MCF 10A (cell line): ENCODE measurements at regions of chr2 and their contacts with region 1.

Region 1: DNA sequence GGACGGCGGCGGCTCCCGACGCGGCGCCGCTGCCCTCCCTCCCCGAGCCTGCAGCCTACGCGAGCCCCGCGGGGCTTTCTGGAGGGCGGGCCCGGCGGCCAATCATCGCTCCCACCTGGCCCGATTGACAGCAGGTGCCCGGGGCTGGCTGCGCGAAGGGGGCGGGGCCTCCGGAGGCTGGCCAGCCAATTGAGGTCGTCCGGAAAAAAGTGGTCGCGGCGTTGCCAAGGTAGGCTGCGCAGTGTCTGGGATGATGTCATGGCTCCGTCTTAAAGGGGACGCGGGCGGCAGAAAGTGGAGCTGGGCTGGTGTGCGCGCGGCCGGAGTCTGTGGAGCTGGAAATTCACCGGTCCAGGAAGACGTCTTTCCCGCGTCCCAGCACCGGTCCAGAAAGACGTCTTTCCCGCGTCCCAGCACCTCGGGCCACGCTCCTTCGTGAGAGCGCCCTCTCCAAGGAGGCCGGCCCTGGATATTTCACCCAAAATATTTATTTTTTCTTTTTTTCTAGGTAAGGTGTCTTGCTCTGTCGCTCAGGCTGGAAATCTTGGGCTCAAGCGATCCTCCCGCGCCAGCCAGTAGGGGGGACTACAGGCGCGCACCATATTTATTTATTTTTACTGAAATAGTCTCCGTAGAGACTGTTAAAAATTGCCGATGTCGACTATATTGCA is at the start of gene ACTR1B:
- DNase-seq: peak; percentile 98
- H3K4me3 Mint-ChIP-seq: peak within 1 kb of the TSS; percentile 88
- H3K27ac Mint-ChIP-seq: peak within 1 kb of the TSS; percentile 93
- H3K4me1 Mint-ChIP-seq: peaks cover 9% of the 10 kb centered on the region
- H3K27me3 Mint-ChIP-seq: no peaks in the 10 kb centered on the region
- CTCF ChIP-seq: no peak
- total RNA-seq, gene ACTR1B: 56.8 and 63.7 TPM in 2 replicates

Region 2: DNA sequence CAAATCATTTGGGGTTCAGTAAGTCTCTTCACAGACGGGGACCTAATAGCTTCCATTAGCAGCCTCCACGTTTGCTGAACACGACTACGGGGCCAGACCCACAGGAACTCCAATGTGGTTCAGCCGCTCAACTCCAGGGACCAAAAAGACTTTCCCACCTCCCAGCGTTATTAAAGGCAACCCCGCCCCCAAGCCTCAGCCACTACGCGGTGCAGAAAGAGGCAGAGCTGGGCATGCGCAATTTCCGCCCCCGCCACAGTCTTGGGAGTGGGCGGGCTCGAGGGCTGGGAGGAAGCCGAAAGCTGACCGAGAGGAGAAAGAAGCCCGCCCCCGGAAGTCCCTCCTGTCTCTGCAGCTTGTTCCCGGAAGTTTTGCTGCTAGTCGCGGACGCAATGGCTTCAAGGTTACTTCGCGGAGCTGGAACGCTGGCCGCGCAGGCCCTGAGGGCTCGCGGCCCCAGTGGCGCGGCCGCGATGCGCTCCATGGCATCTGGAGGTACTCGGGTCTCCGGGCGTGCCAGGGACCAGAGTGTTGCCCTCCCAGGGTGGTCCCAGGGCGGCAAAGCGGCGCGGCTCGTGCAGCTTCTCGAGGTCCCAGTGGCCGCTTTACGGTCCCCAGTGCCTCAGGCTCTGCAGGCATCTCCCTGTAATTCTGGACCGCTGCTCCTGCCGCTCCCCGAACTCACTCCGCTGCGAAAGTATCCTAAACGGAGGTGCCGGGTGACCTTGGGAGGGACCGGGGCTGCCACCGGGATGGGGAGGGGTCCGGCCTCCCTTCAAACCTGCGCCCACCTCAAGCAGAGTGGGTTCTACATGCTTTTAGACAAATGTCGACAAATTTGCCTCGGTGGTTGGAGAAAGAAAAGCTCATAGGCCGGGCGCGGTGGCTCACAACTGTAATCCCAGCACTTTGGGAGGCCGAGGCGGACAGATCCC is 18.1 kb before region 1 on chr2 and contains the start of gene COX5B:
- CTCF ChIA-PET with region 1: interaction called, 34 read pairs
- POLR2A ChIA-PET with region 1: interaction called, 150 read pairs
- intact Hi-C with region 1: no loop called
- DNase-seq: peak; percentile 97
- H3K4me3 Mint-ChIP-seq: peak within 1 kb of the TSS; percentile 96
- H3K27ac Mint-ChIP-seq: peak within 1 kb of the TSS; percentile 90
- H3K4me1 Mint-ChIP-seq: peaks cover 12% of the 10 kb centered on the region
- H3K27me3 Mint-ChIP-seq: no peaks in the 10 kb centered on the region
- CTCF ChIP-seq: no peak
- total RNA-seq, gene COX5B: 272 and 284 TPM in 2 replicates

Region 3: DNA sequence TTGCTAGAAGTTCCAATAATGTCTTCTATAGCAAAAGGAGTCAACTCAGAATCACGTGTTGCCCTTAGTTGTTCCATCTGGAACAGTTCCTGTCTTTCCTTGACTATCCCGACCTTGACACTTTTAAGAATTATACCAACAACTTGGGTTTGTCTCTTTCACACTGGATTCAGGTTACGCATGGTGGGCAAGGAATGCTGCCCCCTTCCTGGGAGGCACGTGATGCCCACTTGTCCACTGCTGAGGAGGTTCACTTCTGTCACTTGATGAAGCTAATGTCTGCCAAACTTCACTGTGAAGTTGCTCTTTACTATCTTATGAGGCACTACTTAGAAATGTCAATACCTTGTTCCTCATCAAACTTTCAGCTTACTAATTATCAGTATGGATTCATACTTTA is 13.0 kb before region 1 on chr2:
- CTCF ChIA-PET with region 1: interaction called, 34 read pairs
- POLR2A ChIA-PET with region 1: interaction called, 150 read pairs
- intact Hi-C with region 1: no loop called
- DNase-seq: no peak
- H3K4me3 Mint-ChIP-seq: no peak overlapping the region
- H3K27ac Mint-ChIP-seq: no peak overlapping the region
- H3K4me1 Mint-ChIP-seq: peaks cover 7% of the 10 kb centered on the region
- H3K27me3 Mint-ChIP-seq: no peaks in the 10 kb centered on the region
- CTCF ChIP-seq: no peak

Region 4: GRCh38 chr2:97675430-97676113 is 11.5 kb after region 1 on chr2:
- CTCF ChIA-PET with region 1: interaction called, 6 read pairs
- POLR2A ChIA-PET with region 1: interaction called, 10 read pairs
- intact Hi-C with region 1: no loop called
- DNase-seq: no peak
- H3K4me3 Mint-ChIP-seq: no peak overlapping the region
- H3K27ac Mint-ChIP-seq: no peak overlapping the region
- H3K4me1 Mint-ChIP-seq: no peaks in the 10 kb centered on the region
- H3K27me3 Mint-ChIP-seq: no peaks in the 10 kb centered on the region
- CTCF ChIP-seq: no peak

Region 5: DNA sequence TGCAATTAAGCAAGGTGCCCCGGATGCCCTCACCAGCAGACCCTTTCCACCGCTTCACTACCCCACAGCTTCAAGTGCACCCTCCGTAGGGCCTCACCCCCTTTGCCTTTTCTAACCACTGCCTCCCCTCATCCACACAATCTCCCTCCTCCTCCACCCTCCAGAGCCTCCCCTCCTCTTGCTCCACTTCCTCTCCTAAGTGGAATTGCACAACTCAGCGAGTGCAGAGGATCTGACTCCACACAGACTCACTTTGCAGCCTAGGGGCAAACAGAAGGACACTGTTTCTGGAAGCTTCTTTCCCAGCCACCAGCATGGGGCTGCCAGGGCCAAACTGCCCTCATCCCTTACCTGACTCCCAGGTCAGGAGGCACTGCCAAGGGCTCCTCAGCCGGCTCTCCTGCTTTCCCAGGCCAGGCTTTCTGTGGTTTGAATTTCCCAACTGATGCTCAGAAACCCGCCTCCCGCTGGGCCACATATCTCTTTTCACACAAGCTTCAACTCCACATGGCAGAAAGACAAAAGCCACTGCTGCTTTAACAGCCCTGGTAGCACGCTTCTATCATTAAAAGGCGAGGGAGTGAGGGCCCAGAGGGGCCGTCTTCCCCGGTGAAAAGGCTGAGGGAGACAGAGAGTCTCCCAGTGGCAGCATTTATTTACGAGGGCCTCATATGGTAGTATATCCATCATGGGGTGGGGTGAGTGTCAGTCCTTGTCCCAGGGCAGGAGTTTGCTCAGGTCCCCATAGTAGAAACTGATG is 1141.5 kb after region 1 on chr2:
- CTCF ChIA-PET with region 1: no interaction called
- POLR2A ChIA-PET with region 1: no interaction called
- intact Hi-C with region 1: no loop called
- DNase-seq: peak; percentile 97
- H3K4me3 Mint-ChIP-seq: peak overlapping the region; percentile 40
- H3K27ac Mint-ChIP-seq: peak overlapping the region; percentile 22
- H3K4me1 Mint-ChIP-seq: peaks cover 40% of the 10 kb centered on the region
- H3K27me3 Mint-ChIP-seq: no peaks in the 10 kb centered on the region
- CTCF ChIP-seq: no peak